Esophagus squamous epithelium (tissue), 5 donors: ENCODE measurements at regions of chr10 and their contacts with region 1.

Region 1: GRCh38 chr10:62244780-62245467 is 23.7 kb downstream of the RTKN2 start:
- DNase-seq: no peak
- H3K4me3 ChIP-seq: no peak overlapping the region
- H3K27ac ChIP-seq: no peak overlapping the region
- H3K4me1 ChIP-seq: peaks cover 6 to 30% (median 10%) of the 10 kb centered on the region in 3 donors
- H3K27me3 ChIP-seq: no peaks in the 10 kb centered on the region
- CTCF ChIP-seq: peak; percentile 51 to 90 (median 85)
- POLR2A ChIP-seq: no peak

Region 2: GRCh38 chr10:61750929-61751471 is 493.9 kb before region 1 on chr10:
- intact Hi-C with region 1: loop called (anchors 10 kb)
- DNase-seq: no peak
- H3K4me3 ChIP-seq: no peak overlapping the region
- H3K27ac ChIP-seq: peak overlapping the region in 3 of 4 donors; percentile 44 to 61 (median 59)
- H3K4me1 ChIP-seq: peaks cover 0 to 51% (median 17%) of the 10 kb centered on the region in 3 donors
- H3K27me3 ChIP-seq: no peaks in the 10 kb centered on the region
- CTCF ChIP-seq: peak; percentile 42 to 84 (median 66)
- POLR2A ChIP-seq: no peak

Region 3: DNA sequence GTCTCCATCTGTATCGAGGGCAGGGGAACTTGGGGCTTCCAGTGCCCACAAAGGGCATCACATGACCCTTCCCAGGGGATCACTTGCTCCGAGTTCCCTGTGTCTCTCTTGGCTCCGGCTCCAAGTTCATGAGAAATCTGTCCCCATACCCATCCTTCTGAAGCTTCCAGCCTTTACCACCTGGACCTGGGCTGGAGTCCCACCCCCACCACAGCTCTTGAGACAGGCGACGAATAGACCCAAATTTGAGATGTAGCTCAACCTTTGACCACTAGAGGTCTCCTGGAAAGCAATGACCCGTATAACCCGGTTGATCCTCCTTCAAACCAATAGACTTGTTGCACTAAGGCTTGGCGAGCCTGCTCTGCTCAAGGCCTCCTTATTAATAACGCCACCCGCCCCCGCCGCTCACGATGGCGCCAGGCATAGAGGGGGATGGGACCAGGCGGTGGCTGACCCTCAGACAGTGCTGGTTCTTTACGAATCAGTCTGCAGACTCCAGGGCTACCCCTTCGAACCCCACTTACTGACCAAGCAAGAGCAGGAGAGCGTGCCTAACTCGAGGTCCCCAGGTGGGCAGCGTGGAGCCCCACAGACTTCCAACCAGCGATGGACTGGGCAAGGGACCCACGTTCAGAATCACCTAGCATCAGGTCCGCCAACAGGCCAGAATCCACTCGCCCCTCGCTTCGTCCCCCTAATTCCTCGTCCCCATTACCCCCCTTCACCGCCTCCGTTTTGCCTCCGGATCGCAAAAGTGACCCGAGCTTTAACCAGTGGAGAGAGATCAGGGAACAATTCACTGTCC is 347.9 kb before region 1 on chr10:
- intact Hi-C with region 1: loop called (anchors 10 kb)
- DNase-seq: no peak
- H3K4me3 ChIP-seq: peak overlapping the region; percentile 21 to 58 (median 44)
- H3K27ac ChIP-seq: peak overlapping the region; percentile 47 to 100 (median 55)
- H3K4me1 ChIP-seq: peaks cover 0 to 42% (median 22%) of the 10 kb centered on the region in 3 donors
- H3K27me3 ChIP-seq: no peaks in the 10 kb centered on the region
- CTCF ChIP-seq: peak; percentile 57 to 79 (median 66)
- POLR2A ChIP-seq: peak in 1 of 4 donors; percentile 56

Region 4: GRCh38 chr10:62038609-62039190 is 206.2 kb before region 1 on chr10:
- intact Hi-C with region 1: loop called (anchors 5 kb)
- DNase-seq: no peak
- H3K4me3 ChIP-seq: peak overlapping the region in 3 of 4 donors; percentile 14 to 45 (median 19)
- H3K27ac ChIP-seq: peak overlapping the region; percentile 75 to 87 (median 80)
- H3K4me1 ChIP-seq: peaks cover 33 to 89% (median 43%) of the 10 kb centered on the region in 3 donors
- H3K27me3 ChIP-seq: no peaks in the 10 kb centered on the region
- CTCF ChIP-seq: peak; percentile 77 to 90 (median 86)
- POLR2A ChIP-seq: no peak

Region 5: DNA sequence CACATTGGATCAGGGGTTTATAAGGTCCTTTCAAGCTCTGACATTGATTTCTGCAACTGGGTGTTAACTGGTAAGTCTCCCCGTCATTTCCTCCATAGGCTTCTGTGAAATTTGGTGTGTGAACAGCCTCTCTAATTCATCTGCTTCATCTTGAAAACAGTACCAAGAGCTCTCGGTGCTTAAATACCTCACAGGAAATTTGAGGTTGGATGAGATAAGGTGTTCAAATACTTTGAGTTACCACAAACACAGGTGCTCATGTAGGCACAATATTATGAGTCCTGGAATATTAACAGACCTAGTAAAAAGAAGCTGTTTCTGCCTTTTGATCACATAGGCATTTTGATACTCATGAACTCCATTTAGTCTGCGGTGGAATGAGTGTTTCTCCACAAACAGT is 61.5 kb before region 1 on chr10:
- intact Hi-C with region 1: no loop called
- DNase-seq: no peak
- H3K4me3 ChIP-seq: no peak overlapping the region
- H3K27ac ChIP-seq: no peak overlapping the region
- H3K4me1 ChIP-seq: no peaks in the 10 kb centered on the region
- H3K27me3 ChIP-seq: no peaks in the 10 kb centered on the region
- CTCF ChIP-seq: no peak
- POLR2A ChIP-seq: no peak